CD8-positive, alpha-beta T cell (primary cell): ENCODE measurements at regions of chr7 and their contacts with region 1.

Region 1: DNA sequence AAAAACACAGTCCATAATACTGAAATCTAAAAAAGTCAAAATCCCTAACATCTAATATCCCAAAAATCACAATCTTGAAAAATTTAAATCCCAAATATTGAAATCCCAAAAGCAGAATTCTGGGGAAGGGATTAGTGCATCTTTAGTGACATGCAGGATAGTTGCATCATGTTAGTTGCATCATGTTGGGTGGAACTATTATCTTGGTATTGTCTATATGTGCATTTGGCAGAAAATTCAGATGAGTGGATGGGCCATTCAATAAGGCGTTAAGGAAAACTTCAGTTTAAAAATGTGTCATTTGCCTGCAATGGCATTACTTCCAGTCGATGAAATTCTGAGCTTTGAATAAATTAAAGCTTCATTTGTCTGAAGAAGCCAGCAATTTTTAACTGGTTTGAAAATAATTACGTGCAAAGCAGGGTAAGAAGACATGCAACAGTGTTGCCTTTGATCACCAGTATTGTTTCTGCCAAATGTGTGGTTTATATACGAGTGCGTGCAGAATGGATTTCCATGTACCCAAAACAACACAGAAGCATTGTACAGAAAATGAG is 221.4 kb upstream of the NFE2L3 start:
- DNase-seq: no peak
- ATAC-seq: no peak
- H3K4me3 ChIP-seq: no peak overlapping the region
- H3K4me3 Mint-ChIP-seq: no peak overlapping the region
- H3K27ac ChIP-seq: no peak overlapping the region
- H3K27ac Mint-ChIP-seq: no peak overlapping the region
- H3K4me1 ChIP-seq: no peaks in the 10 kb centered on the region
- H3K4me1 Mint-ChIP-seq: no peaks in the 10 kb centered on the region
- H3K27me3 ChIP-seq: peaks cover 0 to 4% of the 10 kb centered on the region in 2 experiments
- H3K27me3 Mint-ChIP-seq: peaks cover 27% of the 10 kb centered on the region
- CTCF ChIP-seq: no peak

Region 2: DNA sequence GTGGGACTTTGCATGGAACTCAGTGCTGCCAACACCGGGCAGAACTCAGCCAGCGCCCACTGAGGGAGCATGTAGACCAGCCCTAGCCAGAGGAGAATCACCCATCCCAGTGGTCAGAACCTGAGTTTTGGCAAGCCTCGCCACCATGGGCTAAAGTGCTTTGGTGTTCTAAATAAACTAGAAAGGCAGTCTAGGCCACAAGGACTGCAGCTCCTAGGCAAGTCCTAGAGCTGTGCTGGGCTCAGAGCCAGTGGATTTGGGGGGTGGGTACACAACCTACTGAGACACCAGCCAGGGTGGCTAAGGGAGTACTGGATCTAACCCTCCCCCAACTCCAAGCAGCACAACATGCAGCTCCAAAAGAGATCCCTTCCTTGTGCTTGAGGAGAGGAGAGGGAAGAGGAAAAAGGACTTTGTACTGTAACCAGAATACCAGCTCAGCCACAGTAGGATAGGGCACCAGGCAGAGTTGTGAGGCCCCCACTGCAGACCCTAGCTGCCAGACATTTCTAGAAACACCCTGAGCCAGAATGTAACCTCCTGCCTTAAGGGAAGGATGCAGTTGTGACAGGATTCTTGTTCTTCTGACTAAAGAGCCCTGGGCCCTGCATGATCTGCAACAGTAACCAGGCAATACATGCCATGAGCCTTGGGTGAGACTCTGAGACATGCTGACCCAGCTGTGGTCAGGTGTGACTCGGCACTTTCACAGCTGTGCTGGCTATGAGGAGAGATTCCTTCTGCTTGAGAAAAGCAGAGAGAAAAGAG is 1197.7 kb before region 1 on chr7:
- CTCF ChIA-PET with region 1: no interaction called
- POLR2A ChIA-PET with region 1: no interaction called
- intact Hi-C with region 1: no loop called
- DNase-seq: peak in 1 of 9 experiments; percentile 13
- ATAC-seq: no peak
- H3K4me3 ChIP-seq: no peak overlapping the region
- H3K4me3 Mint-ChIP-seq: no peak overlapping the region
- H3K27ac ChIP-seq: no peak overlapping the region
- H3K27ac Mint-ChIP-seq: no peak overlapping the region
- H3K4me1 ChIP-seq: peaks cover 6% of the 10 kb centered on the region
- H3K4me1 Mint-ChIP-seq: peaks cover 12% of the 10 kb centered on the region
- H3K27me3 ChIP-seq: no peaks in the 10 kb centered on the region
- H3K27me3 Mint-ChIP-seq: peaks cover 21% of the 10 kb centered on the region
- CTCF ChIP-seq: no peak

Region 3: DNA sequence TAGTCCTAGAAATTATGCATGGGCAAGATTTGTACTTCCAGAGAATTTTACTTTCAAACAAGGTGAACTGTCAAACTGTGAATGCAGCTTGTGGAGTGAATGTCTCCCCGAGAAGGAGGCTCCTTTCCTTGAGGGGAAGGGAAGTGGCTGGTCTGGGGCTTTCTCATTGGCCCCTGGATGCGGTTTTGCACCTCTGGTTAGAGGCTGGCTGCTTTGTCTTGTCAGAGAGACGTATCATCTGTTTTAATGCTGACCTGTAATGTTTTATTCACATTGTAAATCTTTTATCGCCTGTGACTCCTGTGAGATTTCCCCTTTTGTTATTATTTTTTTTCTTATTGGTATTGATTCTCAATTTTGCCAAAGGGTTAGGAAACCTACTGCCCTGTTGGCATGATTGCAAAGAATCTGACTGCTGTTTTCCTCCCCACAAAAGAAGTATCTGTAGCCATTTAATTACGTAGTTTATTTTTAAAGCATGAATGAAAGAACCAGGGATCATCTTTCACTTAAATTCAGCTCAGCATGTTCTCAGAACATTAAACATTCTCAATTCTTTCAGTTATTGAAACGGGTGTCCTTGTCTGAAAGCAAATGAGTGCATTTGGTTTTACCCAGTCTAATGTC is 16.9 kb before region 1 on chr7:
- CTCF ChIA-PET with region 1: no interaction called
- POLR2A ChIA-PET with region 1: no interaction called
- intact Hi-C with region 1: no loop called
- DNase-seq: peak in 2 of 9 experiments; percentile 24 to 43
- ATAC-seq: peak; percentile 40
- H3K4me3 ChIP-seq: no peak overlapping the region
- H3K4me3 Mint-ChIP-seq: no peak overlapping the region
- H3K27ac ChIP-seq: no peak overlapping the region
- H3K27ac Mint-ChIP-seq: no peak overlapping the region
- H3K4me1 ChIP-seq: no peaks in the 10 kb centered on the region
- H3K4me1 Mint-ChIP-seq: no peaks in the 10 kb centered on the region
- H3K27me3 ChIP-seq: no peaks in the 10 kb centered on the region
- H3K27me3 Mint-ChIP-seq: peaks cover 4% of the 10 kb centered on the region
- CTCF ChIP-seq: no peak

Region 4: GRCh38 chr7:25989140-25989705 is 58.7 kb after region 1 on chr7:
- CTCF ChIA-PET with region 1: no interaction called
- POLR2A ChIA-PET with region 1: no interaction called
- intact Hi-C with region 1: loop called in 1 of 2 experiments (anchors 10 kb)
- DNase-seq: no peak
- ATAC-seq: no peak
- H3K4me3 ChIP-seq: no peak overlapping the region
- H3K4me3 Mint-ChIP-seq: no peak overlapping the region
- H3K27ac ChIP-seq: no peak overlapping the region
- H3K27ac Mint-ChIP-seq: no peak overlapping the region
- H3K4me1 ChIP-seq: no peaks in the 10 kb centered on the region
- H3K4me1 Mint-ChIP-seq: peaks cover under 1% of the 10 kb centered on the region
- H3K27me3 ChIP-seq: no peaks in the 10 kb centered on the region
- H3K27me3 Mint-ChIP-seq: peaks cover 8% of the 10 kb centered on the region
- CTCF ChIP-seq: no peak